ENCODE measurements at regions of chr15 and their contacts with region 1.

Region 1: GRCh38 chr15:96330450-96331145 is at the start of gene NR2F2:
- DNase-seq: peak; percentile 91 to 98
- ATAC-seq: peak; percentile 57 to 71
- H3K4me3 ChIP-seq: peak within 1 kb of the TSS; percentile 71
- H3K27ac ChIP-seq: peak within 1 kb of the TSS; percentile 89 to 99
- H3K4me1 ChIP-seq: peaks cover 42% of the 10 kb centered on the region
- CTCF ChIP-seq: no peak
- EP300 ChIP-seq: no peak
- POLR2A ChIP-seq: peak; percentile 63
- RAD21 ChIP-seq: no peak
- polyA plus RNA-seq, gene NR2F2: 11.8 and 14.4 TPM in 2 replicates

Region 2: DNA sequence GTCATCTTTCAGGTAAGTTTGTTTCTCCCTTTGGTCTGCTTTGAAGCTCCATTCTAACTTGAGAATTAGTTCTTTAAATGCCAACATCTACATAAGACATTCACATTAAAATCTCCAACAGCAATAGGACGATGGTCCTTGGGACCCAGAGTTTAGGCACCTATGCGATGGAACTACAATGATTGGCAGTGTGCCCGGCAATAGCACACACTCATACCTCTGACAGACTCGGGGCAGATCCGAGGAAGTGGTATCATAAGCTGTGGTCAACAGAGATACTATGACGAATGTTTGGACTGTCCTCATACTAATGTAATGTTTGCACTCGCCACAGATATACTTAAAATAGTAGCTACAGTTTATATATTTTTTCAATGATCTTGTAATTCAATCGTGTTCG is 34.3 kb before region 1 on chr15:
- CTCF ChIA-PET with region 1: no interaction called
- POLR2A ChIA-PET with region 1: no interaction called
- DNase-seq: no peak
- ATAC-seq: no peak
- H3K4me3 ChIP-seq: no peak overlapping the region
- H3K27ac ChIP-seq: no peak overlapping the region
- H3K4me1 ChIP-seq: no peaks in the 10 kb centered on the region
- CTCF ChIP-seq: no peak
- EP300 ChIP-seq: no peak
- POLR2A ChIP-seq: no peak
- RAD21 ChIP-seq: no peak

Region 3: GRCh38 chr15:96312639-96313335 is 17.8 kb before region 1 on chr15:
- CTCF ChIA-PET with region 1: interaction called, 18 read pairs
- POLR2A ChIA-PET with region 1: interaction called, 3 read pairs
- DNase-seq: no peak
- ATAC-seq: no peak
- H3K4me3 ChIP-seq: no peak overlapping the region
- H3K27ac ChIP-seq: no peak overlapping the region
- H3K4me1 ChIP-seq: no peaks in the 10 kb centered on the region
- CTCF ChIP-seq: no peak
- EP300 ChIP-seq: no peak
- POLR2A ChIP-seq: no peak
- RAD21 ChIP-seq: no peak

Region 4: GRCh38 chr15:96356494-96357455 is 26.2 kb after region 1 on chr15:
- CTCF ChIA-PET with region 1: interaction called, 128 read pairs
- POLR2A ChIA-PET with region 1: interaction called, 9 read pairs
- DNase-seq: peak; percentile 82 to 84
- ATAC-seq: peak; percentile 69 to 84
- H3K4me3 ChIP-seq: peak overlapping the region; percentile 57
- H3K27ac ChIP-seq: peak overlapping the region; percentile 69 to 87
- H3K4me1 ChIP-seq: 0 out of 3 replicates have a peak, but pooled peaks cover 10% of the 10 kb centered on the region
- CTCF ChIP-seq: peak; percentile 98
- EP300 ChIP-seq: no peak
- POLR2A ChIP-seq: no peak
- RAD21 ChIP-seq: peak; percentile 75 to 90

Region 5: GRCh38 chr15:96716075-96716474 is 385.5 kb after region 1 on chr15:
- CTCF ChIA-PET with region 1: no interaction called
- POLR2A ChIA-PET with region 1: no interaction called
- DNase-seq: no peak
- ATAC-seq: no peak
- H3K4me3 ChIP-seq: no peak overlapping the region
- H3K27ac ChIP-seq: no peak overlapping the region
- H3K4me1 ChIP-seq: no peaks in the 10 kb centered on the region
- CTCF ChIP-seq: no peak
- EP300 ChIP-seq: no peak
- POLR2A ChIP-seq: no peak
- RAD21 ChIP-seq: no peak

Region 6: GRCh38 chr15:97234851-97235610 is 904.4 kb after region 1 on chr15:
- CTCF ChIA-PET with region 1: interaction called, 11 read pairs
- POLR2A ChIA-PET with region 1: no interaction called
- DNase-seq: peak; percentile 45 to 49
- ATAC-seq: peak; percentile 83 to 93; a peak in 5 of 6 replicates
- H3K4me3 ChIP-seq: no peak overlapping the region
- H3K27ac ChIP-seq: no peak overlapping the region
- H3K4me1 ChIP-seq: no peaks in the 10 kb centered on the region
- CTCF ChIP-seq: peak; percentile 83
- EP300 ChIP-seq: no peak
- POLR2A ChIP-seq: no peak
- RAD21 ChIP-seq: peak; percentile 81 to 87